ENCODE measurements at regions of chr1 and their contacts with region 1.

Region 1: DNA sequence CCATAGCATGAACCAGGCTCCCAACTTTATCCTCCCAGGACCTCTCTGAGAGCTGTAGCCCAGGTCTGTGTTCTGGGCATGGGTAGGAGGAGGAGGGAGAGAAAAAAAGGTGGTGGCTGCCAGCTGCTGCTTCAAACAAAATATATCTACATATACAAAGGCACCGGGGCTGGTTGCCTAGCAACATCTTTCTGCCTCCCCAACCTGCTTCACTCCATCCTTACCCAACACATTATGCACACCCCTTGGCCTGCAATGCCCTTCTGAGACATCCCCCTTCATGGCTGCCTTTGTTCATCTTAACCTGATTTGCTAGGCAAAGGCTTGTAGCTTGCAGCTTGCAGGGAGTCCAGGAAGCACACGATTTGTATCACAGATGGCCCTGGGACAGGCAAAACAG is 27.2 kb upstream of the ATP1A1 start:
- DNase-seq: peak in 8 of 9 donors; percentile 17 to 89 (median 86)
- ATAC-seq: peak; percentile 93
- H3K4me3 ChIP-seq: no peak overlapping the region
- H3K4me3 Mint-ChIP-seq: peak overlapping the region in 9 of 10 donors; percentile 18 to 77 (median 70)
- H3K27ac ChIP-seq: peak overlapping the region; percentile 72
- H3K27ac Mint-ChIP-seq: peak overlapping the region in 8 of 9 donors; percentile 89 to 98 (median 92)
- H3K4me1 ChIP-seq: peaks cover 9 to 83% of the 10 kb centered on the region in 2 donors
- H3K4me1 Mint-ChIP-seq: peaks cover 10 to 93% (median 89%) of the 10 kb centered on the region in 7 donors
- H3K27me3 ChIP-seq: no peaks in the 10 kb centered on the region
- H3K27me3 Mint-ChIP-seq: peaks cover 0 to 3% (median 0%) of the 10 kb centered on the region in 5 donors

Region 2: GRCh38 chr1:115679141-115679611 is 666.7 kb before region 1 on chr1:
- CTCF ChIA-PET with region 1: no interaction called
- POLR2A ChIA-PET with region 1: no interaction called
- intact Hi-C with region 1: no loop called
- DNase-seq: no peak
- ATAC-seq: no peak
- H3K4me3 ChIP-seq: no peak overlapping the region
- H3K4me3 Mint-ChIP-seq: no peak overlapping the region
- H3K27ac ChIP-seq: no peak overlapping the region
- H3K27ac Mint-ChIP-seq: no peak overlapping the region
- H3K4me1 ChIP-seq: no peaks in the 10 kb centered on the region
- H3K4me1 Mint-ChIP-seq: peaks cover 0 to 15% (median 0%) of the 10 kb centered on the region in 7 donors
- H3K27me3 ChIP-seq: no peaks in the 10 kb centered on the region
- H3K27me3 Mint-ChIP-seq: no peaks in the 10 kb centered on the region

Region 3: GRCh38 chr1:116311756-116312691 is 33.8 kb before region 1 on chr1:
- CTCF ChIA-PET with region 1: no interaction called
- POLR2A ChIA-PET with region 1: interaction called, 4 read pairs
- intact Hi-C with region 1: loop called in 1 of 2 experiments (anchors 5 kb)
- DNase-seq: no peak
- ATAC-seq: no peak
- H3K4me3 ChIP-seq: no peak overlapping the region
- H3K4me3 Mint-ChIP-seq: no peak overlapping the region
- H3K27ac ChIP-seq: no peak overlapping the region
- H3K27ac Mint-ChIP-seq: peak overlapping the region in 1 of 9 donors; percentile 59
- H3K4me1 ChIP-seq: peaks cover 0 to 14% of the 10 kb centered on the region in 2 donors
- H3K4me1 Mint-ChIP-seq: peaks cover 7 to 69% (median 47%) of the 10 kb centered on the region in 7 donors
- H3K27me3 ChIP-seq: no peaks in the 10 kb centered on the region
- H3K27me3 Mint-ChIP-seq: no peaks in the 10 kb centered on the region

Region 4: DNA sequence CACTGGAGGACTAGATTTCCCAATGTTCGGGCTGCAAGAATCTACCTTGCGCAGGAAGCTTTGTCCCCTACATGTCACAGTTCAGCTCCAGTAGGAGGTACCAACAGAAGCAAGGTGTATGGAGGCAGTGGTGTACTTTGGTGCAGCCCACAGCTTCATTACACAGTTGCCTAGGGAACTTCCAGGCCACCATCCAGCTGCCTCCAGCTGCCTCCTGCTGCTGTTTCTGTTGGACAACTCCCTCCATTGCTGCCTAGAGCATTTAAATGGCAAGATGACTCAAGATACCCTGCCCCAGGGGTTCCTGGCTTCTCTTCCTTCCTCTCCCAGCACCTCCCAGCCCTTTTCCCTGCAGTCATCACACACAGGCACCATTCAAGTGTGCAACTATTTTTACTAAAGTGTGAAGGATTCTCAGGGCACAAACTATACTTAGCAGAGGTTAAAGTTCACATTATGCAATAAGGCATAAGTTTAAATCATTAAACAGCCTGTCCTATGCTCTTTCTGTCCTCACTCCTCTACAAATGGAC is 11.8 kb before region 1 on chr1:
- CTCF ChIA-PET with region 1: interaction called, 6 read pairs
- POLR2A ChIA-PET with region 1: interaction called, 26 read pairs
- intact Hi-C with region 1: no loop called
- DNase-seq: no peak
- ATAC-seq: no peak
- H3K4me3 ChIP-seq: no peak overlapping the region
- H3K4me3 Mint-ChIP-seq: peak overlapping the region in 4 of 10 donors; percentile 7 to 41 (median 17)
- H3K27ac ChIP-seq: no peak overlapping the region
- H3K27ac Mint-ChIP-seq: peak overlapping the region in 5 of 9 donors; percentile 4 to 82 (median 13)
- H3K4me1 ChIP-seq: peaks cover 0 to 37% of the 10 kb centered on the region in 2 donors
- H3K4me1 Mint-ChIP-seq: peaks cover 18 to 88% (median 77%) of the 10 kb centered on the region in 7 donors
- H3K27me3 ChIP-seq: no peaks in the 10 kb centered on the region
- H3K27me3 Mint-ChIP-seq: peaks cover 0 to 11% (median 0%) of the 10 kb centered on the region in 5 donors

Region 5: DNA sequence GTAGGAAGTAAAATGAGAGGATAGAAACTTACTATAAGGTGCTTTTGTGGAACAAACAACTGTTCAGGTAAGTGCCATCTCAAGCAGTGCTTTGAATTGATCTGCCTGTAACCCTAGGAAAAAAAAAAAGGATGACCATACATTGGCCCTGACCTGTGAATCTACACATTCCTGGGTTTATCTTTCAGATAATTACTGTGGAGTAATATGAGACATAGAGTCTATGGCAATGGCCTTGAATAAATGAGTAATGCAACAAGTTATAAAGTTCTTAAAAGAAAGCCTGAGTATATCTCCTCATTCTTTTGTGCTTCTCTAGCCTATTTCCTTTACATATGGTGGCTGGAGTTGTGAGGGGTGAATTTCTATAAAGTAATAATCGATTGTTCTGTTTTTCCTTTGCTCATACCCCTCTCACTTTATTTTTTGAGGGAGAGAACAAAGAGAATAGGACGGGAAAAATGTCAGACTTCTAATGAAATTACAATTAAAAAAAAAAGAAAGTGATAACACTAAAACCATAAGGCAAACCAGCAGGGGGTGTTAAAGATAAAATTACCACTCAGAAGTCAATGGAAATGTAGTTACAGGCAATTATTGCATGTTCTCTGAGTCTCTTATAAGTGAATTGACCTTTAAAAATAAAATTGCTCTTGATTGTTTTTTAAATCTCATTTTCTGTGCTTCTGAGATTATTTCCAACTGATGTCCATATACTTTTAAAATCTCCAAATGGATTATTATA is 14.8 kb after region 1 on chr1:
- CTCF ChIA-PET with region 1: interaction called, 3 read pairs
- POLR2A ChIA-PET with region 1: interaction called, 6 read pairs
- intact Hi-C with region 1: loop called in 1 of 2 experiments (anchors 1 kb)
- DNase-seq: peak in 3 of 9 donors; percentile 7 to 30 (median 15)
- ATAC-seq: no peak
- H3K4me3 ChIP-seq: no peak overlapping the region
- H3K4me3 Mint-ChIP-seq: no peak overlapping the region
- H3K27ac ChIP-seq: no peak overlapping the region
- H3K27ac Mint-ChIP-seq: peak overlapping the region in 1 of 9 donors; percentile 63
- H3K4me1 ChIP-seq: peaks cover 0 to 13% of the 10 kb centered on the region in 2 donors
- H3K4me1 Mint-ChIP-seq: peaks cover 4 to 55% (median 33%) of the 10 kb centered on the region in 7 donors
- H3K27me3 ChIP-seq: no peaks in the 10 kb centered on the region
- H3K27me3 Mint-ChIP-seq: peaks cover 0 to 24% (median 0%) of the 10 kb centered on the region in 5 donors

Region 6: GRCh38 chr1:116711263-116711840 is 365.5 kb after region 1 on chr1:
- CTCF ChIA-PET with region 1: no interaction called
- POLR2A ChIA-PET with region 1: no interaction called
- intact Hi-C with region 1: no loop called
- DNase-seq: no peak
- ATAC-seq: no peak
- H3K4me3 ChIP-seq: no peak overlapping the region
- H3K4me3 Mint-ChIP-seq: no peak overlapping the region
- H3K27ac ChIP-seq: no peak overlapping the region
- H3K27ac Mint-ChIP-seq: no peak overlapping the region
- H3K4me1 ChIP-seq: no peaks in the 10 kb centered on the region
- H3K4me1 Mint-ChIP-seq: peaks cover 0 to 8% (median 0%) of the 10 kb centered on the region in 7 donors
- H3K27me3 ChIP-seq: no peaks in the 10 kb centered on the region
- H3K27me3 Mint-ChIP-seq: peaks cover 8 to 21% (median 12%) of the 10 kb centered on the region in 5 donors